ENCODE measurements at regions of chr7 and their contacts with region 1.

Region 1: DNA sequence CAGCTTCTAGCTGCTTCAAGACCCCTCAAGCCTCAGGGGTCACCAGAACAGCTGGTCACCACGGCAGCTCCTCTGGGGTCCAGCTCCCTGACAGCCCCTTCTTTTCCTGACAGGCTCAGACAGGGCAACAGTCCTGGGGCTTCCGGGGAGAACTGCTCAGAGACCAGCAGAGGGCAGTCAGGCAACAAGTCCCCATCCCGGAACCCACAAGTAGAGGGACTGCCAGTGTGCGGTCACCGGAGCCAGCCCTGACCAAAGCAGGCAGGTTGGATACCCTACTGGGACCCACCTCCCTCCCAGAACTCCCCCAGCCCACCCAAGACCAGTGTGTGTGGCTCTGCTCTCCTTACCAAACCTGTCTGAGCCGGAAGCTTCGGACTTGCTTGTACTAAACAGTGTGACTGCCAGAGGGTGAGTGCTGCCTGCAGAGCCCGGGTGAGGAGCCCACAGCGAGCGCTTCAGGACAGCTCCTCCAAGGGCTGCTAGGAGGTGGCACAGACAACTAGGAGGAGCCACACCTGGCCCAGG is 40.3 kb downstream of the YKT6 start:
- DNase-seq: peak; percentile 84 to 92
- ATAC-seq: peak; percentile 87 to 96
- H3K4me3 ChIP-seq: no peak overlapping the region
- H3K27ac ChIP-seq: peak overlapping the region; percentile 24 to 79; a peak in 4 of 6 replicates
- H3K4me1 ChIP-seq: no peaks in the 10 kb centered on the region
- CTCF ChIP-seq: peak; percentile 83
- EP300 ChIP-seq: no peak
- POLR2A ChIP-seq: no peak
- RAD21 ChIP-seq: peak; percentile 81 to 86

Region 2: GRCh38 chr7:44218418-44219201 is 22.4 kb before region 1 on chr7:
- CTCF ChIA-PET with region 1: interaction called, 12 read pairs
- POLR2A ChIA-PET with region 1: no interaction called
- DNase-seq: no peak
- ATAC-seq: no peak
- H3K4me3 ChIP-seq: no peak overlapping the region
- H3K27ac ChIP-seq: no peak overlapping the region
- H3K4me1 ChIP-seq: no peaks in the 10 kb centered on the region
- CTCF ChIP-seq: no peak
- EP300 ChIP-seq: no peak
- POLR2A ChIP-seq: no peak
- RAD21 ChIP-seq: no peak

Region 3: DNA sequence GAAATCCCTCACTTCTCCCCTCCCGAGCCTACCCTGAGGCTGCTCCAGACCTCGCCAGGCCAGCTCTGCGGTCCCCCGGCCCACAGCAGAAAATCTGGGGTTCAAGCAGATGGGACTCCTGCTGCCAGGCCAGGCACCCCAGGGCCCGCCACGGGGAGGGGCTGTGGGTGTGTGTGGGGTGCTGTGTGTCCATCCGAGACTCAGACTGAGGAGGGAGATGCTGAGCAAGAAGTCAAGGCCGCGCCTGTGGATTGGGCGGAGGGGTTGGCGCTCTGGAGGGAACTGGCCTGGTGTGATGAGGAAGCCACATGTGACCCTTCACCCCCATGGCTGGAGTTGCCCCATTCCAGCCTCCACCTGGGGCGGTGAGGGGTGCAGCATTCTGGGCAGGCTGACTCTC is 10.8 kb after region 1 on chr7:
- CTCF ChIA-PET with region 1: interaction called, 25 read pairs
- POLR2A ChIA-PET with region 1: no interaction called
- DNase-seq: no peak
- ATAC-seq: no peak
- H3K4me3 ChIP-seq: no peak overlapping the region
- H3K27ac ChIP-seq: no peak overlapping the region
- H3K4me1 ChIP-seq: no peaks in the 10 kb centered on the region
- CTCF ChIP-seq: no peak
- EP300 ChIP-seq: no peak
- POLR2A ChIP-seq: no peak
- RAD21 ChIP-seq: no peak

Region 4: DNA sequence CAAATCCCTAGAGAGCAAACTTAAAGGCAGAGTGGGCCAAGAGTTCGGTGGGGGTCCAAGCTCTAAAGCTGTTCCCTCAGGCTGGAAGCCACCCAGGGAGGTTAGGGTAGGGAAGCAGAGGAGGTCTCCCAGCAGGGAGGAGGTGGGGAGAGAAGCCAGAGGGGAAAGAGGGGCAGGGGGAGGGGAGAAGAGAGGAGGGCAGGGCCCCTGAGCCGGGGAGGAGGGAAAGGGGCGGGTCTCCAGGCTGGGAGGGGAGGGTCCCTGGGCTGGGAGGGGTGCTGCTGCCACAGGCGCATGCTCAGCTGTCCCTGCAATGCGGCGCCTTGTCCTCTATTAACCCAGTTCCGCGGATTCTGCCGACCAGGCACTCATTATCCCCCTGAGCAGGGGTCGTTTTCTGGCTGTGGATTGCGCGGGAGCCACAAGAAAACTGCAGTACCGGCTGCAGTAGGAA is 34.9 kb after region 1 on chr7:
- CTCF ChIA-PET with region 1: interaction called, 13 read pairs
- POLR2A ChIA-PET with region 1: no interaction called
- DNase-seq: no peak
- ATAC-seq: no peak
- H3K4me3 ChIP-seq: no peak overlapping the region
- H3K27ac ChIP-seq: no peak overlapping the region
- H3K4me1 ChIP-seq: no peaks in the 10 kb centered on the region
- CTCF ChIP-seq: no peak
- EP300 ChIP-seq: no peak
- POLR2A ChIP-seq: no peak
- RAD21 ChIP-seq: no peak

Region 5: GRCh38 chr7:44473295-44473694 is 232.2 kb after region 1 on chr7:
- CTCF ChIA-PET with region 1: interaction called, 23 read pairs
- POLR2A ChIA-PET with region 1: no interaction called
- DNase-seq: peak in 1 of 2 experiments; percentile 21
- ATAC-seq: peak in 1 of 2 experiments; percentile 36; a peak in 1 of 6 replicates
- H3K4me3 ChIP-seq: no peak overlapping the region
- H3K27ac ChIP-seq: no peak overlapping the region
- H3K4me1 ChIP-seq: 0 out of 3 replicates have a peak, but pooled peaks cover 3% of the 10 kb centered on the region
- CTCF ChIP-seq: no peak
- EP300 ChIP-seq: no peak
- POLR2A ChIP-seq: no peak
- RAD21 ChIP-seq: no peak

Region 6: DNA sequence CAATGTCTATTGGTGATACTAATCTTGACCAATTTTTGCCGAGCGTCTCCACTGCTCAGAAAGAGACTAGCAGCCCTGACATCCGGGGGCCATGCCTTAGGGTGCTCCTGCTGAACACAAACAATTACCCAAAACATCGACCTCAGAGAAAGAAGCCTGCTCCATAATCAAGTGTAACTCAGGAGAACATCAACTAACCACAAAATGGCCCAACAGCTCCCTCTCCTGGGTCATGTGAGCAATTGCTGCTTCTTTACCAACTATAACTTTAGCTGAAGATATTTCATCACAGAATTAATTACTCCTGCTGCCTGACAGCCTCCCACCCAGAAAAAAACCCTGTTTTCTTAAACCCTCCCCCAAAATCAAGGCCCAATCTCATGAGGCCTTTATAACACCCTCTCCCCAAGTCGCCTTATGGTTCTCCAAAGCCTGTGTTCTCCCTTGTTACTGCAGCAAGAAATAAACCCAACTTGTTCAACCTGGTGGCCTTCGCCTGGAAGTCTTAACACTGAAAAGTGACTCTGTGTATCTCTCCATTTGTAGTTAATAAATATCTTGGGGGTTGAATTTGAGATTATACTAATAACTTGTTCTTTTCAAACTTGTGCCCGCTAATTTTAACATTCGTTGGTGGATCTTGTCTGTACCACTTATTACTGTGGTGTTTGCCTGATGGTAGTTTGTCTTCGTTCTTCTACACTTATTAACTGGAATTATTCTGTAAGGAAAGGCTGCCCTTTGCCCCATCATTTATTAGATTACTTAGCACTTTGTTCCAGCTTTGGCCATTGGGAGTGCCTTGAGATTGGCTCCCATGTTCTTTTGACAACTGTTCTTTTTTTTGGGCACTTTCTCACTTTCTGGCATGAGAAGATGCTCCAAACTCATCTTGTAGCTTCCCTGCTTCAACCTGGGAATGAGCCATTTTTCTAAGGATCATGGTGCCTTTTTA is 895.3 kb after region 1 on chr7:
- CTCF ChIA-PET with region 1: interaction called, 10 read pairs
- POLR2A ChIA-PET with region 1: no interaction called
- DNase-seq: peak; percentile 76 to 90
- ATAC-seq: peak; percentile 77 to 90
- H3K4me3 ChIP-seq: no peak overlapping the region
- H3K27ac ChIP-seq: no peak overlapping the region
- H3K4me1 ChIP-seq: no peaks in the 10 kb centered on the region
- CTCF ChIP-seq: peak; percentile 92
- EP300 ChIP-seq: no peak
- POLR2A ChIP-seq: no peak
- RAD21 ChIP-seq: peak; percentile 92 to 95